Sciatic nerve (tissue), 2 donors: ENCODE measurements at regions of chr19 and their contacts with region 1.

Region 1: GRCh38 chr19:39390755-39391592 is at the starts of genes MED29 and PAF1:
- DNase-seq: peak; percentile 96
- ATAC-seq: peak; percentile 99
- total RNA-seq, gene MED29: 37.2 TPM
- total RNA-seq, gene PAF1: 38.7 TPM

Region 2: GRCh38 chr19:38975214-38975860 is 415.6 kb before region 1 on chr19 and contains the start of gene FBXO17:
- intact Hi-C with region 1: no loop called
- DNase-seq: peak; percentile 74
- ATAC-seq: peak; percentile 78
- total RNA-seq, gene FBXO17: 30.0 TPM

Region 3: DNA sequence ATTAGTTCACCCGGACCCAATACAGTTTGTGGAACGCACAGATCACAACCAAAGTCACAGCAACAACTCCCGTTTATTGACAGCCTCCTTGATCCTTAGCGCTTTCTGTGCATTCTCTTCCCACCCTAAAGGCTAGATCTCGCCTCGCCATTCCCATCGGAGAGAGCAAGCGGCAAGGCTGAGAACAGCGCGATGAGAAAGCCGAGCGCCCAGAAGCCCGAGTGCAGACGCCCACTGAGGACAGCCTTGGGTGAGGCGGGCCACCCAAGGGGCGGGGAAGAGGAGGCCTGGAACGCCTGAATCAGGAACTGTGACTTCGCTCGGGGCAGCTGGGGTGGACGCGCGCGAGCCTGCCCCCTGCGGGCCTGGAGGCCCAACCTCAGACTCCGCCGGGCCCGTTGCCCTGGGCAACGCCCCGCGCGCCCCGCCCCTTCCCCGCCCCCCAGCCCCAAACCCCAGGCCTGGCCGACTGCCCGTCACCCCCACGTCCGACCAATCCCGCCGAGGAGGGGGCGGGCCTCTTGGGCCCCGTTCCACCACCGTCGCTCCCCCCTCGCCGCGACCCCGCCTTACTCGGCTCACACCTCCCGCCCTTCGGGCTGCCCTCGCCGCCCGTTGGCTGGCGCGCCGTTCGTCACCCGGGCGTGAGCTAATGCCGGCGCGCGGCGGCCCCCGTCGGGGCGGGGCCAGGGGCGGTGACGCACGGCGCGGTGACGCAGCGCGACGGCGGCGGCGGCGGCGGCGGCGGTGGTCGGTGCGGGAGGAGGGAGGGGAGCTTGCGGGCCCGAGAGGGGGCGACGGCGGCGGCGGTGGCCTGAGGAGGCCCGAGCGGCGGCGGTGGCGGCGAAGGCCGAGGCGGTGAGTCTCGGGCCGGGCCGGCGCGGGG is 49.0 kb before region 1 on chr19 and contains the start of gene SAMD4B:
- intact Hi-C with region 1: loop called (anchors 10 kb)
- DNase-seq: peak; percentile 99
- ATAC-seq: peak; percentile 95
- total RNA-seq, gene SAMD4B: 139 TPM